Gastrocnemius medialis (tissue), 4 donors: ENCODE measurements at regions of chr13 and their contacts with region 1.

Region 1: DNA sequence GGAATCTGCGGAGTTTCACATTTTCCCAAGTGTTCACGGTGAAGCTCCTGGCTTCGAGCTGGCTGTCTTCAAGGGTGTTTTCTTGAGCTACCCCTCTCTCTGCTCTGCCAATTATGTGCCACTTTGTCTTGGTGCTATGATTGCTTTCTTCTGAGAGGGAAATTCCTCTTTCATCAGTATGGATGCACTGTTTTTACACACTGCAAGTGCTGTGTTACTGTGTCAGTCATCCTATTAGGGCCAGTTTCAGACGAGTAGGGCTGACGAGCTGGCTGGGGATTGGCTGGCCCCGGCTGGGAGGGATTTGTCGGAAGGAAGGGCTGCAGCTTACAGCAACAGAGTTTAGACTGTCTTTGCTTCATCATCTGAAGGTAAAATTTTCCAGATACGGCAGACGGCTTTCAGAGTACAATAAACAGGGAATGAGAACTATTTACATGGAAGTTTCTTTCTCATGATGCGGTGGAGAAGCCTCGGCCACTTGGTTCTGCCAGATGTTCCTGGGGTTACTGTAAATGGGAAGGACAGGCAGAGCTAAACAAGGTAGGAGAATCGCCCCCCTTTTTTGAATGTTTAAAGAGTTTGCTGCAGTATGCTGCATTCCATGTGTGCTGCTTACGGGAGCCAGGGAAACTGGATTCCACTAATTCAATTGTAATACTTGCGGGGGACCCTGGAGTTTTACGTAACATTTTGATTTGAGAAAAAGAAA is at the start of gene MBNL2:
- DNase-seq: peak; percentile 89 to 91
- ATAC-seq: peak; percentile 86 to 88
- H3K4me3 ChIP-seq: peak within 1 kb of the TSS; percentile 62 to 83 (median 70)
- H3K27ac ChIP-seq: peak within 1 kb of the TSS; percentile 89 to 93 (median 91)
- H3K4me1 ChIP-seq: peaks cover 28 to 32% of the 10 kb centered on the region in 2 donors
- H3K27me3 ChIP-seq: no peaks in the 10 kb centered on the region
- CTCF ChIP-seq: no peak
- POLR2A ChIP-seq: peak; percentile 59 to 87
- total RNA-seq, gene MBNL2: 47.9 to 92.0 (median 71.3) TPM

Region 2: DNA sequence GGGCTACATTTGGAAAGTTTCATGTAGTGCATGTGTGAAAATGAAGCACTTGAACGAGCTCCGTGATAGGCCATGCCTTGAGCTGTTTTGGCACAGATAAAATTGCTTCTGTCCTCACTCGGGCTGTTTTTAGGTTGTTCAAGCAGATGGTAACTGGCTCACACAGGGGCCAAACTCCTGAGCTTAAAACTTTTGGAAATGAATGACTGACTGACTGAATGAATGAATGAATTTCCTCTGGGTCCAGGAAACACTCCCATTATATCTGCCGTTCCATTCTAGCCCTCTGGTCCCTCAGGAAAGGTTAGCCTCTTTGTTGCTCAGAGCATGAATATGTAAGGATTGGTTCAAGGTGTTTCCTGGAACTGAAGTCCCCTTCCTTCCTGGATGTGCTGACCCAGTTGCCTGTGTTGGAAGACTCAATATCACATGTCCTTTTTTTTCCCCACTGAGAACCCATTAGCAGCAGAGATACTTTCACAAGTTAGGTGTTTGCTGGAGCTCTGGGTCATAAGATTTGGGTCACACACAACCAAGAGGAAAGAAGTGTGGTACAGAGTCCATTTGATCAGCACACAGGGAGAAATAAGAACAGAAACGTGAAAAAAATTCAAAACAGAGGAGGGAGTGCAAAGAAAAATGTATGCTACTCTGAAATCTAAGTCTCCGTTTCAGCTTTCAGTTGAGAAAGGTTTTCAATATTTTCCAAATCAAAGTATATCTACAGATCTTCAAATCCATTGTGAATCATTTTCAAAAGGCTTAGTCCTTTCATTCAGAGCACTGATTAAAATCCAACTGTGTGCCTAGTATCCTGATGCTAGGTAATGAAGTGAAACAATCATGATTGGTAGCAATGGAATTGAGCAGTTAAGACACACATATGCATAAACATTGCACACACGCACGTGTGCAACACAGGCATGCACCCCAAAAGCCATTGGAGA is 18.9 kb after region 1 on chr13:
- in situ Hi-C with region 1: no loop called
- intact Hi-C with region 1: loop called (anchors 2 kb)
- DNase-seq: no peak
- ATAC-seq: peak; percentile 12 to 23
- H3K4me3 ChIP-seq: no peak overlapping the region
- H3K27ac ChIP-seq: peak overlapping the region; percentile 62 to 76 (median 68)
- H3K4me1 ChIP-seq: peaks cover 98 to 99% of the 10 kb centered on the region in 2 donors
- H3K27me3 ChIP-seq: no peaks in the 10 kb centered on the region
- CTCF ChIP-seq: no peak
- POLR2A ChIP-seq: no peak

Region 3: DNA sequence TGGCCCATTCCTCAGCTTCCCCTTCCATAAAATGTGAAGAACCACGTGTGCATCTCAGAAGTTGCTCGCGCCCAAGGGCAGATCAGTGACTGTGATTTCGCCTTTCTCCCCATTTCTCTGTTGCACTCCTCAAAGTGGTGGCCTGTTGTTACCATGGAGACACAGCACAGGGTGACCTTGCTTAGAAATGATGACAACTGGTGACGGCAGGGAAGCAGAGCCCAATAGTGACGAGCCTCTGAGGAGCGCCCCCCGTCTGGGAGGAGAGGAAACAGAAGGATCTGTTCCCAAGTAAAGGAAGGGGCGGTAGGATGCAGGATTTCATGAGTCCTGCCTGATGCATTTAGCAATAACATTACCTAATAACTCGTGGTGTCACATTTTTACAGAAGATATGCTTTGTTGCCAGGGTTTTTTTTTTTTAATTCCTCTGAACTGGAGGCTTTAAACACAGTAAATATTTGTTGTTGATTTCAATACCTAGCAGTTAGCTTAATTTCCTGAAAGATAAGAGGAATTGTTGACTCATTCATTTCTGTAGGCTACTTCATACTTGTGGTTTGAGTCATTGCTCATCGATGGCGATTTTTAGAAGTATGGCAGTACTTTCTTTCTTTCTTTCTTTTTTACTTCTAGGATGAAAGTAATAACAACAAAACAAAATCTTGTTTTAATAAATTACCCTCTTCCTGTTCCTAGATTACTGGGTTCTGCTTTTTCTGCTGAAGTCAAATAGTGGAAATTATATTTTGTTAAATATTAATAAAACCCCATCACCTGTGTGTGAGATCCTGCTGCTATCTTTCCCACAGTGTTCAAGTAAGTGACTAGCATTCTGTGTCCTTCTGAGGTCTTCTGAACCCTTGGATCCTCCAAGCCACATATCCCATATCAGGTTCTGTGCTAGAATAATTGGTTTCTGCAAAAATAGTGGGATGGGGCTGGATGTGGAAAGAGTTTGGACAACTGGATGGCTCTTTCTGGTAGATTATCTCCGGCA is 36.0 kb after region 1 on chr13:
- in situ Hi-C with region 1: no loop called
- intact Hi-C with region 1: loop called (anchors 1 kb)
- DNase-seq: peak; percentile 48 to 79
- ATAC-seq: peak; percentile 37 to 57
- H3K4me3 ChIP-seq: no peak overlapping the region
- H3K27ac ChIP-seq: peak overlapping the region; percentile 72 to 87 (median 76)
- H3K4me1 ChIP-seq: peaks cover 94 to 97% of the 10 kb centered on the region in 2 donors
- H3K27me3 ChIP-seq: no peaks in the 10 kb centered on the region
- CTCF ChIP-seq: no peak
- POLR2A ChIP-seq: no peak

Region 4: DNA sequence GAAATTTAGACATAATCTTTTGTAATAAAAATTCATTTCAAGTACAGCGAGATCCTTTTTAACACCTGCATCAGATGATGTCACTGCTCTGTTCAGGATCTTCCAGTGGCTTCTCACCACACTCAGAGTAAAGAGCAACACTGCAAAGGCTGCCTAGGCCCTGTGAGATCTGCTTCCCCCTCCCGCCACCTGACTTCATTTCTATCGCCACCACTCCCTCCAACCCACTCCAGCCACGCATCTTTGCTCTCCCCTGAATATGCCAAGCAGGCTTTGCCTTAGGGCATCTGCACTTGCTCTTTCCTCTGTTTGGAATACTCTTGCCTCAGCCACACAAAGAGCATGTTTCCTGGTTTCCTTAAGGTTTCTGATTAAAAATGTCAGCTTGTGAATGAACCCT is 58.3 kb after region 1 on chr13:
- in situ Hi-C with region 1: no loop called
- intact Hi-C with region 1: no loop called
- DNase-seq: no peak
- ATAC-seq: no peak
- H3K4me3 ChIP-seq: no peak overlapping the region
- H3K27ac ChIP-seq: peak overlapping the region; percentile 3 to 47 (median 17)
- H3K4me1 ChIP-seq: peaks cover 79 to 89% of the 10 kb centered on the region in 2 donors
- H3K27me3 ChIP-seq: no peaks in the 10 kb centered on the region
- CTCF ChIP-seq: no peak
- POLR2A ChIP-seq: no peak

Region 5: DNA sequence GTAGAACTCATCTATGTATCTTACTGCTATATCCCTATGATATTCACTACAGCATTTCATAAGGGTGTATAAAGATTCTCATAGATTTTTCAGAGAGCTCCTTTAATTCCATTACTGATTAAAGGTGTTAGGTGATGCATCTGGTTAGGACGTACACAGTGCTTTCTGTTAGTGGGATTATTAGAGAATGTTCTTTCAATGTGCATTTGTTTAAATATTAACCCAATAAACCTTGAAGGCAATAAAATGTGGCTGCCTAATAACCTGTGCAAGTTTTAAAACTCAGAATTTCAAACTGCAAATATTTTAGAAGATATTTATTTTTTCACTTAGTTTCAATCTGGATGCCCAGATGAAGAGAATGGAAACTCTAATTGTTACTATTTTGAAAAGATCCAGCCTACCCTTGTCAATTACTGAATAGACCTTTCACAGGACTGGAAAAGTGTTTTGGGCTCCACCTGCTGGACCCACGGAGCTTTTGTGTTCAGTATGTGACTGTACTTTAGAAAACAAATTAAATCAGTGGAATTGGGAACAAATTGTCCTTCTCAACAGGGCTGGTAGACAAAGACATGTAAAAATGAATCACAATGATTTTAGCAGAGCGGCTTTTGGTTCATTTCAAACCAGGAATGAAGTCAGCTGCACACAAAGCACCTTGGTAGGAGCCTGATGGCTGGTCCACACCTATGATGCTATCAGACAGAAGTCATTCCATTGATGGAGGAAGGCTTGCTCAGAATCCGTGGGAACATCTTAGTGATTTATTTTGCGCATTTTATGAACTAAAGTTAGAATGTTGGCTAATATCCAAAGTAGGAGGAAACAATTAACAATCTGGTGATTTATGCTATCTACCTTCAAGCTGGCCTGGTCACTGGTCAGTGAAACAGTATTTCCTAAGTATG is 122.4 kb after region 1 on chr13:
- in situ Hi-C with region 1: loop called in 1 of 4 experiments (anchors 5 kb)
- intact Hi-C with region 1: loop called (anchors 2 kb)
- DNase-seq: peak in 1 of 2 donors; percentile 59
- ATAC-seq: peak; percentile 76 to 81
- H3K4me3 ChIP-seq: no peak overlapping the region
- H3K27ac ChIP-seq: peak overlapping the region; percentile 41 to 76 (median 70)
- H3K4me1 ChIP-seq: peaks cover 16 to 25% of the 10 kb centered on the region in 2 donors
- H3K27me3 ChIP-seq: no peaks in the 10 kb centered on the region
- CTCF ChIP-seq: peak; percentile 54 to 73 (median 64)
- POLR2A ChIP-seq: no peak

Region 6: DNA sequence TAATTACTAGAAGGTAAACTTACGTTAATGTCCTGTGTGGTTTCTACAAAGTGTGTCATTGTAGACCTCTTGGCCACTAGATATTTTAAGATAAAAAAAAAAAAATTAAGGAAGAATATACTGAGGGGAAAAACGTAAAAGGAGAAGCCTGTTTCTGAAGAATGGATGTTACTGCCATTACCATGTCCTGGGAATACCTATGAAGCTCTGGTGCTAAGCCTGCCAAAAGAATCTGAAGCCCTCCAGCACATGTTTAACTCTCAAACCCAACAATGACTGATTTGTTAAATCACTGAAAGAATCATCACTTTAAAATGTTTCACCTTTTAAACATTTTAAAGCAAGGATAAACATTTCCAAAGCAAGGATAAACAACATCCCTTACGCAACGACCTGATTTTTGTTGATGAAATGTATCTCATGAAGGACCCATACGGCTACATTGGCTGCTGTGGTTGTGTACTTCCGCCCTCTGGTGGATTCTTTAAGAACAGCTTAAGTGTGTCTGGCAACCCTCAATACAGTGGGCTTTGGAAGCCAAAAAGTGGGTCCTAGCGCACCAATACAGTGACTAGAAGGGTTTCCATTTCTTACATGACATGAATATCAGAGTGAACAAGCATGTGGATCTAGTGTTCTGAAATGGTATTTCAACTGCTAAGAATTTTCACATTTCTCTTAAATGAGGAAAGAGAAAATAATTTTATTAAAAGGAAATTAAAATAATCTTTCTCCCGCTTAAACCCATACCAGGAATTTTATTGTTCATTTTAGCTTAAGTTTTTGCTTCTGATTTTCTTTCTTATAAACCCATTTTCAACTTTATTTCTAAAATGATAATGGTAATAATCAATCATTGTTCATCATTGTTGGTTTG is 137.3 kb after region 1 on chr13:
- in situ Hi-C with region 1: loop called in 1 of 4 experiments (anchors 10 kb)
- intact Hi-C with region 1: loop called (anchors 5 kb)
- DNase-seq: peak in 1 of 2 donors; percentile 54
- ATAC-seq: peak; percentile 95 to 96
- H3K4me3 ChIP-seq: no peak overlapping the region
- H3K27ac ChIP-seq: peak overlapping the region; percentile 32 to 67 (median 56)
- H3K4me1 ChIP-seq: peaks cover 18 to 24% of the 10 kb centered on the region in 2 donors
- H3K27me3 ChIP-seq: no peaks in the 10 kb centered on the region
- CTCF ChIP-seq: peak; percentile 80 to 85 (median 83)
- POLR2A ChIP-seq: no peak

Region 7: DNA sequence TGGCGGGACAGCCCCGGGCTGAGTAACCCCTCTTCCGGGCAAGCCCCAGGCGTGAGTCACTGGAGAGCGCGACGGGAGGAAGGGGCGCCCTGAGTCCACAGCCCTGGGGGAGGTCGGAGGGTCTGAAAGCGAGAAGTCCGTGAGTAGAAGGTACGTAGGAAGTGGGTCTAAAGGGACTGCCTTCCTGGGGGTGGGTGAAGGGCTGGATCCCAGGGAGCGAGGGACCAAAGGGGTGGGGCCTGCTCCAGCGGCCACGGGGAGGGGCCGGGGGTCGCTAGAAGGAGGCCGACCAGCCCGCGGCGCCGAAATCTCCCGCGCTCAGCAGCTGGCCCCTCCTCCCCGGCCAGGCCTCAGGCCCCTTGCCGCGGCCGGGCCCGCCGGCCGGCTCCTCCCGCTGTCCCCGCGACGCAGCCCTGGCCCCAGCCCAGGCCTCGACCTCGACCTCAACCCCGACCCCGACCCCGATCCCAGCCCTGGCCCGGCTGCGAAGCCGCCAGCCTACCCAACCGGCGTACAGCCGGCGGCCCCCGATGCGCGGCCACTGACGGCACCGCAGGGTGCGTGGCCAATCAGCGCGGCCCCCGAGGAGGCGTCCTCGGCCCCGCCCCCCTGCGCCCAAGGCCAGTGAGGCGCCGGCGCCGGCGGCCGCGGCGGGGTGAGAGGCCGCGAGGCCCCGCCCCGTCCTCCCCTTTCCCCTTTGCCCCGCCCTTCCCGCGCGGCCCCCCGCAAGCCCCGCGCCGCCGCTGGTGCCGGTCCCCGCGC is 753.9 kb after region 1 on chr13:
- in situ Hi-C with region 1: no loop called
- intact Hi-C with region 1: loop called (anchors 10 kb)
- DNase-seq: peak; percentile 78 to 87
- ATAC-seq: peak; percentile 92 to 93
- H3K4me3 ChIP-seq: peak overlapping the region; percentile 70 to 88 (median 84)
- H3K27ac ChIP-seq: peak overlapping the region; percentile 81 to 95 (median 90)
- H3K4me1 ChIP-seq: peaks cover 36 to 40% of the 10 kb centered on the region in 2 donors
- H3K27me3 ChIP-seq: no peaks in the 10 kb centered on the region
- CTCF ChIP-seq: peak in 1 of 5 experiments; percentile 24
- POLR2A ChIP-seq: peak; percentile 81 to 92